Activated T-helper 2 cell treated with anti-CD3 and anti-CD28 coated beads, Interferon-gamma antibody, Interleukin-2, Interleukin-4, amounts not matched to agents 10 μg/mL and 5 μg/mL and 100 μg/mL, durations not matched to agents 14 hours and 24 hours and 36 hours (primary cell): ENCODE measurements at regions of chr2 and their contacts with region 1.

Region 1: GRCh38 chr2:98455494-98455976 is 10.9 kb downstream of the INPP4A start:
- DNase-seq: peak; percentile 52
- H3K4me3 Mint-ChIP-seq: peak overlapping the region; percentile 59
- H3K27ac Mint-ChIP-seq: peak overlapping the region; percentile 91
- H3K4me1 Mint-ChIP-seq: peaks cover 92% of the 10 kb centered on the region
- H3K27me3 Mint-ChIP-seq: no peaks in the 10 kb centered on the region

Region 2: DNA sequence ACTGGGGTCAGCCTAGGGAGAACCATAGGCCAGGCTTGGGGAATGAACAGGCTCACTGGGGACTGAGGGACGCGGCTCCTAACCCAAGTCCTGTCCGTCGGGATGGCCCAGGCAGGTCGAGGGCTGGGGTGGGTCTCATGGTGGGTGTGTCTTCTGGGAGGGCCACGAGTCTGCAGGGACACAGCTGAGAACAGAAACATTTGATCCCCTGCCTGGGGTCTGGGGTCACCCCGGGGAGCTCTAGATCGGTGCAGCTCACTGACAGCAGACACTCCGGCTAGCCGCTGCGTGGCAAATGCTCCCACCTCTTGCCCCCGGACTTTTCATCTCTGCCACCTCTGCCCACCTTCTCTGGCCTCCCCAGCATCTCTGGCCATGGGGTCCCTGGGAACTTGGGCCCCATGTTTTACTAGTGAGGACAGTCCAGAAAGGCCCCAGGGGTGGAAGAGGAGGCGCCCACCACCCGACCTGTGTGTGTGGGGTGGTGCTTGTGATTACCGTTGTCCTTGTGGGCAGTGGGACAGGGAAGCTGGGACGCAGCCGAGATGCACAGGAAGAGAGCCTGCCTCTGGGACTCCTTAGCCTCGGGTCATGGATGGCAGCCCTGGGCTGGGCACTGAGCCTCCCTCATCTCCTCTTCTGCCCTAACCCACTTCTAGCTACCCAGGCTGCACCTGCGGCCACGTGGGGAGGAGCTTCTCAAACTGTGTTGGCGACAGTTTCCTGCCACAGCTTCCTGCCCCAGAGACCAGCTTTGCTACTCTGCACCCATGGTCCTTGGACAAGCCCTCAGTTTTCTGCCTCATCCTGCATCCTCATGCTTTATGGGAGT is 737.3 kb before region 1 on chr2:
- intact Hi-C with region 1: loop called (anchors 10 kb)
- DNase-seq: peak; percentile 69
- H3K4me3 Mint-ChIP-seq: peak overlapping the region; percentile 97
- H3K27ac Mint-ChIP-seq: peak overlapping the region; percentile 91
- H3K4me1 Mint-ChIP-seq: peaks cover 67% of the 10 kb centered on the region
- H3K27me3 Mint-ChIP-seq: no peaks in the 10 kb centered on the region

Region 3: GRCh38 chr2:98438190-98439133 is 17.1 kb before region 1 on chr2:
- intact Hi-C with region 1: loop called (anchors 1 kb)
- DNase-seq: peak; percentile 4
- H3K4me3 Mint-ChIP-seq: peak overlapping the region; percentile 61
- H3K27ac Mint-ChIP-seq: peak overlapping the region; percentile 93
- H3K4me1 Mint-ChIP-seq: peaks cover 25% of the 10 kb centered on the region
- H3K27me3 Mint-ChIP-seq: no peaks in the 10 kb centered on the region

Region 4: GRCh38 chr2:98444436-98445176 is 10.9 kb before region 1 on chr2 and contains the start of gene INPP4A:
- intact Hi-C with region 1: loop called (anchors 1 kb)
- DNase-seq: peak; percentile 70
- H3K4me3 Mint-ChIP-seq: peak within 1 kb of the TSS; percentile 86
- H3K27ac Mint-ChIP-seq: peak within 1 kb of the TSS; percentile 86
- H3K4me1 Mint-ChIP-seq: peaks cover 37% of the 10 kb centered on the region
- H3K27me3 Mint-ChIP-seq: no peaks in the 10 kb centered on the region
- total RNA-seq, gene INPP4A: 35.9 and 40.2 TPM in 2 replicates

Region 5: GRCh38 chr2:98560256-98560771 is 104.8 kb after region 1 on chr2:
- intact Hi-C with region 1: no loop called
- DNase-seq: no peak
- H3K4me3 Mint-ChIP-seq: no peak overlapping the region
- H3K27ac Mint-ChIP-seq: no peak overlapping the region
- H3K4me1 Mint-ChIP-seq: peaks cover 32% of the 10 kb centered on the region
- H3K27me3 Mint-ChIP-seq: no peaks in the 10 kb centered on the region